ENCODE measurements at regions of chr16 and their contacts with region 1.

Region 1: GRCh38 chr16:66928702-66929388 is 3.5 kb upstream of the RRAD start:
- DNase-seq: peak; percentile 49
- H3K4me3 ChIP-seq: no peak overlapping the region
- H3K27ac ChIP-seq: no peak overlapping the region
- H3K4me1 ChIP-seq: peaks cover 9 to 37% (median 29%) of the 10 kb centered on the region in 4 donors
- H3K27me3 ChIP-seq: peaks cover 16% of the 10 kb centered on the region
- CTCF ChIP-seq: peak in 4 of 5 experiments; percentile 22 to 46 (median 33)
- EP300 ChIP-seq: no peak
- POLR2A ChIP-seq: no peak

Region 2: DNA sequence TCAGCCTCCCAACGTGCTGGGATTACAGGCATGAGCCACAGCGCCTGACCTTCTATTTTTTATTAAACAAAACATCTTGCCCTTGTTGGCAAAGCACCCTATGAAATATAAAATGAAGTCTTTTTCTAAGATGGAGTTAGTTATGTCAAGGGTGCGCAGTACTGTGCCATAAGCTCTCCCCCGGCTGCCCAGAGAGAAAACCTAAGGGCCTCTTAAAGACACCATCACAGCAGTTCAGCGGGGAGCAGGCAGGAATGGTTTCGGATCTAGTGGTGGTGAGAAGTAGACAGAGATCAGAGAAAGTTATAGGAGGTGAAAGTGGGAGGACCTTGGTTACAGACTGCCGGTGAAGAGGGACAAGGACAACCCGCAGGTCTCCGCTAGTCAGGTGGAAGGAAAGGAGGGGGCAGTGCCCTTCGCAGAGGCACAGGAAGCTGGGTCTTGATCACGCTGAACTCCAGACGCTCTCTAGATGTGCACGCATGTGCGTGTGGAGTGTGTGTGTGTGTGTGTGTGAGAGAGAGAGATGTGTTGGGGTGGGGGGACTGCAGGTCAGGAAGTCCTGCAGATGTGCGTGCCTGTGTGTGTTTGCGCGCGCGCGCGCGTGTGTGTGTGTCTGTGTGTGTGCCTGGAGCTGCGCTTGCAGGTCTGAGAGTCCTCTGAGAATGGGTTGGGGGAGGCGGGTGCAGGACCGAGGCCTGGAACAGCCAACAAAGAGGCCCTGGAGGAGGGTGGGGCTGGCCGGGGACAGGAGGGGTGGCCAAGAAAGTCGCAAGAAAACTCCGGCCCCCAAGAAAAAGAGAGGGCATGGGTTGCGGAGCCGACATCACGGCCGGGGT is 325.1 kb before region 1 on chr16:
- in situ Hi-C with region 1: no loop called
- intact Hi-C with region 1: no loop called
- DNase-seq: peak; percentile 59
- H3K4me3 ChIP-seq: peak overlapping the region; percentile 54 to 84 (median 71)
- H3K27ac ChIP-seq: peak overlapping the region; percentile 81 to 88 (median 84)
- H3K4me1 ChIP-seq: peaks cover 0 to 39% (median 22%) of the 10 kb centered on the region in 4 donors
- H3K27me3 ChIP-seq: peaks cover 17% of the 10 kb centered on the region
- CTCF ChIP-seq: no peak
- EP300 ChIP-seq: no peak
- POLR2A ChIP-seq: peak; percentile 35

Region 3: DNA sequence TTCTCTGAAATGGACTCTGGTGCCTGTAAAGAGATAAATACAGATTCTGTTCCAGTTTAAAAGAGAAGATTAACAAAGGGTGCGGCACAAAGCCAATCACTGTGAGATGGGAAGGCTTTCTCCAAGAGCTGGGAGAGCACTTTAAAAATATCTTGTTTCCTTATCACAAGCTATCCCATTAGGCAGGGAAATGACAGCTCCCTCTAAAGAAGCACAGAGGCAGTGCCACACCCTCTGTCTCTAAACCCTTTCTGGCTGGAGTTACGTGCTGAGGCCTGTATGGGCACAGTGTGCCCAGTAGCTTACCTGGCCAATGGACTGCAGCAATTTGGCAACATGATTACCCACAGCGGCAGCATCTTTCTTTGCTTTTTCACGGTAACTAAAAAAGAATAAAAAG is 118.5 kb before region 1 on chr16:
- in situ Hi-C with region 1: no loop called
- intact Hi-C with region 1: no loop called
- DNase-seq: no peak
- H3K4me3 ChIP-seq: no peak overlapping the region
- H3K27ac ChIP-seq: no peak overlapping the region
- H3K4me1 ChIP-seq: no peaks in the 10 kb centered on the region
- H3K27me3 ChIP-seq: no peaks in the 10 kb centered on the region
- CTCF ChIP-seq: no peak
- EP300 ChIP-seq: no peak
- POLR2A ChIP-seq: no peak

Region 4: GRCh38 chr16:66894948-66895688 is 33.7 kb before region 1 on chr16:
- in situ Hi-C with region 1: no loop called
- intact Hi-C with region 1: loop called (anchors 2 kb)
- DNase-seq: peak; percentile 82
- H3K4me3 ChIP-seq: no peak overlapping the region
- H3K27ac ChIP-seq: peak overlapping the region in 3 of 4 donors; percentile 74 to 80 (median 78)
- H3K4me1 ChIP-seq: peaks cover 14 to 44% (median 30%) of the 10 kb centered on the region in 4 donors
- H3K27me3 ChIP-seq: no peaks in the 10 kb centered on the region
- CTCF ChIP-seq: peak; percentile 79 to 85 (median 83)
- EP300 ChIP-seq: no peak
- POLR2A ChIP-seq: no peak

Region 5: GRCh38 chr16:67246934-67247697 is 318.3 kb after region 1 on chr16 and contains the start of gene FHOD1:
- in situ Hi-C with region 1: no loop called
- intact Hi-C with region 1: no loop called
- DNase-seq: peak; percentile 100
- H3K4me3 ChIP-seq: peak within 1 kb of the TSS; percentile 57 to 84 (median 63)
- H3K27ac ChIP-seq: peak within 1 kb of the TSS; percentile 94 to 95 (median 94)
- H3K4me1 ChIP-seq: peaks cover 30 to 55% (median 49%) of the 10 kb centered on the region in 4 donors
- H3K27me3 ChIP-seq: peaks cover 33% of the 10 kb centered on the region
- CTCF ChIP-seq: peak in 1 of 5 experiments; percentile 29
- EP300 ChIP-seq: no peak
- POLR2A ChIP-seq: peak; percentile 95
- total RNA-seq, gene FHOD1: 25.1 to 177 (median 33.6) TPM

Measured in transverse colon (tissue), 4 donors.